Posterior vena cava (tissue), 2 donors: ENCODE measurements at regions of chr11 and their contacts with region 1.

Region 1: GRCh38 chr11:56841210-56841810 is 92.8 kb upstream of the OR9G4 start:
- DNase-seq: no peak

Region 2: DNA sequence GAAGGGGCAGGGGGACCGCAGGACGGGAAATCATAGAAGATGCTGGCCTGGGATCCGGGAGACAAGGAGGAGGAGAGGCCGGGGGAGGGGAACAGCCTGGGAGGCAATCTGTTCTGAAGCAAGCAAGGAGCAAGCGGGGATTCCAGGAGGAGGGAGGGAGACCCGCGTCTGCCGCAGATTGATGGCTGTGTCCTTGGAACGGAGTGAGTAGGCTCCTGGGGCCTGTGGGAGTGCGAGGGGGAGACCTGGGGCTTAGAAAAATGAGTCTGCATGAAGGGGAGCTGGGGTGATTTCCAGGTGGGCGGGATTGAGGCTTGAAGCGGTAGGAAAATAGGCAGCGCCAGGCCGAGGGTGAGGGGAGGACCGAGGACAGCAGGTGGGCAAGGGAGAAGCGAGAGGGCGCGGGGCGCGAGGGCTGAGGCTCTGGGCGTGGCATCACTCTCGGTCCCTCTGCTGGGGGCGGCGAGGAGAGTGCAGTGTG is 338.8 kb after region 1 on chr11:
- intact Hi-C with region 1: no loop called
- DNase-seq: no peak

Region 3: GRCh38 chr11:57249384-57250319 is 408.3 kb after region 1 on chr11:
- intact Hi-C with region 1: loop called (anchors 2 to 5 kb)
- DNase-seq: peak; percentile 86

Region 4: GRCh38 chr11:58770627-58771457 is 1929.5 kb after region 1 on chr11:
- intact Hi-C with region 1: loop called in 1 of 2 experiments (anchors 5 kb)
- DNase-seq: no peak